ENCODE measurements at regions of chr2 and their contacts with region 1.

Region 1: DNA sequence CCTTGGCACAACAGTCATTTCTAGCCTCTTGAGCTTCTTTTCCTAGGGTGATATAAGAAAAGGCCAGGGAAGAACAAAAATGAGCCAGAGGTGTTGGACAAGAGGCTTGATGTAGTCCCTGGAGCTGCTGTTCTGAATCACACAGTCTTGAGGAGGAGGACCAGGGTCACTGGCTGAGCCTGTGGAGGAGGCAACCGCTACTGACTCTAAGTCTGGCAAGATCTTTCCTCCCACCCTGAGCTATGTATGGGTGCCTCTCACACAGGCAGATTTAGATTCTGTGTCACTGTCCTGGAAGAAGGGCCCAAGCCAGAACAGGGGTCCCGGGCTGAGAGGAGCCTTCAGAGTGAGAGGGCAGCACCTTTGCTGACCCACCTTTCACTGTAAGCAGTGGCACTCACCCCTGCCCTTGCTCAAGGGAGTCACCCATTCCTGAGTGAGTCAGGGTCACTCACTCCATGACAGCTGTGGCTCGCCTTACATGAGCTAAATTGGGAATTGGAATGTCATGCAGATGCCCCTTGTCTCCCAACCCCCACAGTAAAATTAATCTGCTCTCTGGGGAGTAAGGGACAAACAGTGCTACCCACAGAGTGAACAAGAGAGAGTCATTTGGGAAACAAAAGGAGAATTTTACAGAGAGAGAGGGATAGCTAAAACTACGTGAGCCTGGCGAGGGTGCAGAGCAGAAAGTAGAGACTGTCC is at the start of gene TRIM54:
- DNase-seq: no peak
- CTCF ChIP-seq: no peak

Region 2: GRCh38 chr2:26861610-26862224 is 420.3 kb before region 1 on chr2:
- CTCF ChIA-PET with region 1: no interaction called
- POLR2A ChIA-PET with region 1: no interaction called
- DNase-seq: no peak
- CTCF ChIP-seq: no peak

Region 3: DNA sequence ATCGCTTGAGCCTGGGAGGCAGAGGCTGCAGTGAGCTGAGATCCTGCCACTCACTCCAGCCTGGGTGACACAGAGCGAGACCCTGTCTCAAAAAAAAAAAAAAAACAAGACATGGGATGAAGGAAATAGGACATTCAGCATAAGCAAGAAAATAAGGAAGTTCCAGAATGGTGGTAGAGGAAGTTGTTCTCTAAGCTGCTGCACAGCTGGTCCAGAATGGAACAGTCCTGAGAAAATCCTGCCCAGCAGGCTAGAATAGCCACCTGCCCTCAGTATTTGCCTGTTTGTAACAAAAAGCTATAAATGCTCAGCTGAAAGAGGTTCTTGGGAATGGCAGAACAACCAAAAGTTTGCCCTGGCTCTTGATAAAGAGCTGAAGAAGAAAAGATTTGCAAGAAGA is 322.7 kb before region 1 on chr2:
- CTCF ChIA-PET with region 1: interaction called, 30 read pairs
- POLR2A ChIA-PET with region 1: no interaction called
- DNase-seq: no peak
- CTCF ChIP-seq: no peak

Region 4: DNA sequence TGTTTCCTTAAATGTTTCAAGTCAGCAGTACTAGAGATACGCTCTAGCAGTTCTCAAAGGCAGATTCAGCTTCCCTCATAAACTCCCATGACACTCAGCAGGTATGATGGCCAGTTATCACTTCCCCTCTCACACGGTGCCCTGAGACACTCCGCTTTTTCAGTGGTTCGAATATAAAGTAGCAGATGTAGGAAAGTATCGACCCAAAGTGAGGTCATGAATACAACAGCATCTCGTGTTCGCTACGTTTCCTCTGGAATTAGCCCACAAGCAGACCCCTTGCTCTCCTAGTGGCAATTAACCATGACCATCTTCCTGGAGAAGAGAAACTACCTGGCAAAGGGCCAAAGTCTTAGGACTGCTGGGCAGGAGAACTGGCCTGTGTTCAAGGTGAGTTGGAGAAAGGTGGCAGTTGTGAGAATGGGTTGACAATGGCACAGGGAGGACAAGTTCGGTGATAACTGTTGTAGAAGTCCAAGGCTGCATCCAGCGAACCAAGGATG is 239.8 kb before region 1 on chr2:
- CTCF ChIA-PET with region 1: no interaction called
- POLR2A ChIA-PET with region 1: no interaction called
- DNase-seq: peak; percentile 67
- CTCF ChIP-seq: no peak

Region 5: GRCh38 chr2:27095745-27096651 is 186.0 kb before region 1 on chr2:
- CTCF ChIA-PET with region 1: interaction called, 136 read pairs
- POLR2A ChIA-PET with region 1: no interaction called
- DNase-seq: peak; percentile 85
- CTCF ChIP-seq: no peak

Region 6: GRCh38 chr2:27174316-27175040 is 107.5 kb before region 1 on chr2:
- CTCF ChIA-PET with region 1: interaction called, 11 read pairs
- POLR2A ChIA-PET with region 1: no interaction called
- DNase-seq: no peak
- CTCF ChIP-seq: no peak

Region 7: DNA sequence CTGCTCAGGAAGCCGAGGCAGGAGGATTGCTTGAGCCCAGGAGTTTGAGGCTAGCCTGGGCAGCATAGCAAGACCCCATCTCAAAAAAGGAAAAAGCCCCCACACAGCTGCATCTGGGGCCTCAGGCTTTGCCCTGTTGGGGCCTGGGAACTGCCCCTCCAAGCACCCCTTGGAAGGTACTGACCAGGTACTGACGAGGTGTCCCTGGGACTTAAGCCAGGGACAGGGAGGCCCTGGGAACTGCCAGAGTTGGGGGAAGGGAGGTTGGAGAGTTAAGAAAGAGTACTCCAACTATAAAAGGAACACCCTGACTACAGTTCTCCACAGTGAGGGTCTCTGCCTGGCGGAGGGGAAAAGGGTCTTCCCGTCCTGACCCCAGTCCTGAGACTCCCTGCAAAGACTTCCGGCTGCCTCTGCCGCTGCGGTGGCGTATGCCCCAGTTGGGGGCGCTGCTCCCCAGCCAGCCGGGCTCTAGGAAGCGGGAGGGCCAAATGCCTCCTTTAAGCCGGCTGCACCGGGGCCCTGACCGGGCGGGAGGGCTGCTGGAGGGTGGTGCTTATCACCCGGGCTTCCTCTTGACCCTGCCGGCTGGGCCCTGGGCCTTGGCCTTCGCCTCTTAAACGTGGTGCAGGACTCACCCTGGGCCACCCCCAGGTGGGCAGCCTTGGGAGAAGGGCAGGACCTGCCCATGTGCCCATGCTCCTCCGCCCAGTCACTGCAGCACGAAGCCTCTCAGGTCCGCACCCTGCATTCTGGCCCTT is 31.9 kb before region 1 on chr2:
- CTCF ChIA-PET with region 1: interaction called, 77 read pairs
- POLR2A ChIA-PET with region 1: no interaction called
- DNase-seq: peak; percentile 82
- CTCF ChIP-seq: peak; percentile 76

Region 8: DNA sequence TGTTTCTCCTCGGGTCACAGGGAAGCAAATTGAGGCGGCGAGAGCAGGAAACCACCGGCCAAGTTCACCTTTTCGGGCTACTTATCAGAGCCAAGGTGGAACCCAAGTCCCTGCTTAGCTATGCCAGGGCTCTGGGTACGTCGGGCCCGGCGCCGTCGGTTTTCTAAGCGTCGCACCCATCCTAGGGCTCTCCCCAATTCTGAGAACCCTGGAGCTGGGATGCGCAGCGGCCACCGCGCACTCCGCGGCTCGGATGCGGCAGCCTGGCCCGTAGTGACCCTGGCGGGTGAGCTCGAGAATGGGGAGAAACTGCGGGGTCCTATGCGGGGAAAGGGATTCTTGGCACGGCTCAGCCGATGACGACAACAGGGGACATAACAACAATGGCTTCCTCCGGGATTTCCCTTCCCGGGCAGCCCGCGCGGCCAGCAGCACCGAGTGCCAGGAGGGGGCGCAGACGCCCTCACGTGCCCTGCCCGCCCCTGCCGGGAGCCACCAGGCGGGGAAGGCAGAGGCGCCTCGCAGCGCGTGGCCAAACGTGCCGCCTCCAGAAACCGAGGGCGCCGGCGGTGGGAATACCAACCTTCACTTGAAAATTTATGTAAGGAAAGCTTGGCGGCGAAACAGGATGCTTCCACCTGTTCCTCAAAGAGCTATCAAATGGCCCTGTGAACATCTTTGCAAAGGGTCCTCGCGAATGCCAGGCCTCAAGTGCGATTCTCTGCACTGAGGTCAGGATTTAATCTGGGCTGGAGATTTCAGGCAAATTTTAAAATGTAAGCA is 17.1 kb before region 1 on chr2:
- CTCF ChIA-PET with region 1: interaction called, 99 read pairs
- POLR2A ChIA-PET with region 1: no interaction called
- DNase-seq: peak; percentile 80
- CTCF ChIP-seq: peak; percentile 61

Region 9: GRCh38 chr2:27303093-27304025 is 21.4 kb after region 1 on chr2:
- CTCF ChIA-PET with region 1: interaction called, 138 read pairs
- POLR2A ChIA-PET with region 1: no interaction called
- DNase-seq: peak; percentile 70
- CTCF ChIP-seq: peak; percentile 77

Region 10: DNA sequence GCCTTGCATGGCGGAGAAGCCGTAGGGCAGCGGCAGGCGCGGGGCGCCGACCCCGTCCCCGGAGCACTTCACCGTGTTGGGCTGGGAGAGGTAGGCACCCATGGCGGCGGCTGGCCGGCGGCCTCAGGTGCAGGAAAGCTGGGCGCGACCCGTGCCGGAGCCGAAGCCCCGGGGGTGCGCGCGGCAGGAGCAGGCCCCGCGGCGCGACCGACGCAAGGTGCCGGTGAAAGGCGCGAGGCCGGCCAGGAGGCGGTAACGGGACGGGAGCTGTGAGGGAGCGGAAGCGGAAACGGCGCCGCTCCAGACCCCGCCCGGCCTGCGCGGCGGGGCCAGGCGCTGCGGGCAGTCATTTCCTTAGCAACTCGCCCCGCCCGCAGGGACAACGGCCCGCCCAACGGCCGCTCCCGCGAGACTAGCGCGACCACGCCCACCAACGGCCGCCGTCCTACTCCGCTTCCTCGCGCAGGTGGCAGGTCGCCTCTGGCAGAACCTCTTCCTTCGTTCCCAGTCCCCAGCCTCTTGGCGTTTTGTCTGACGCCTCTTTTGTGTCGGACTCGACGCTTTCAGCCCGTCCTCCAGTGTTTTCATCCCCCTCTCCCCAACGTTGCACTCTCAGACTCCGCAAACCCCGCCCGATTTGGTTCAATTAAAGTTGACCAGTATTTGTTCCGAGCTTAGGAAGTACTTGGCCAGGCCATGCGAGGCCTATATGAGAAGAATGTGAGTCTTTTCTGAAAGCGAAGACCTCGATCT is 127.5 kb after region 1 on chr2 and contains the start of gene PPM1G:
- CTCF ChIA-PET with region 1: no interaction called
- POLR2A ChIA-PET with region 1: no interaction called
- DNase-seq: peak; percentile 98
- CTCF ChIP-seq: no peak

Region 11: DNA sequence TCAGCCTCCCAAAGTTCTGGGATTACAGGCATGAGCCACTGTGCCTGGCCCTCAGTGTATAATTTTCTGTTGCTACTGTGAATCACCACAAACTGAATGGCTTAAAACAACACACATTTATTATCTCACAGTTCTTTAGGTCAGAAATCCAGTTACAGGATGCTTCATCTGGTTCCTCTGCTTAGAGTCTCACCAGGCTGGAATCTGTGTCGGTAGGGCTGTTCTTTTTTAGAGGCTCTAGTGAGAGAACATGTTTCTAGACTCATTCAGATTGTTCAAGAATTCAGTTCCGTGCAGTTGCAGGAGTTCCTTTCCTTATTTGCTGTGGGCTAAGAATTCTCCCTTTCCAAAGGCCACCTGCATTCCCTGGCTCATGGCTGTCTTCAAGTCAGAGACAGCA is 324.6 kb after region 1 on chr2:
- CTCF ChIA-PET with region 1: no interaction called
- POLR2A ChIA-PET with region 1: no interaction called
- DNase-seq: no peak
- CTCF ChIP-seq: no peak